OCI-LY7 (cell line): ENCODE measurements at regions of chr5 and their contacts with region 1.

Region 1: GRCh38 chr5:43019614-43020293 is 20.4 kb downstream of the ANXA2R start:
- DNase-seq: peak; percentile 95
- H3K4me3 ChIP-seq: peak overlapping the region; percentile 76
- H3K27ac ChIP-seq: peak overlapping the region; percentile 93
- H3K4me1 ChIP-seq: peaks cover 40% of the 10 kb centered on the region
- CTCF ChIP-seq: peak; percentile 73

Region 2: DNA sequence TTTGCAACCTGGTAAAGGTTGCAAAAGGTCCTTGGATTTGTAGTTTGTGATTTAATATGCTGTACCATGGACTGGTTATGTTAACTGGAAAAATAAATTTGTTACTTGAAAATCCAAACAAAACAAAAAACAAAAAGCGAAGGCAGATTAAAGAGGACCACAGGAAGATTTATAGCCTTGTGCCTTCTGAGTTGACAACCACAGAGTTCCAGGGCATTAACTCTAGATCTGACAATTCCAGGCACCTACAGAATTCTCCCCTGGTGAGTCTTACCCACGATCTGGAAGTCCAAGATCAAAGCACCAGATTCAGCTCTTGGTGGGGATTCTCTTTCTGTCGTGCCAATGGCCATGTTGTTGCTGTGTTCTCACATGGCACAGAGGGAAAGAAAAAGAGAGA is 100.2 kb before region 1 on chr5:
- CTCF ChIA-PET with region 1: no interaction called
- POLR2A ChIA-PET with region 1: no interaction called
- intact Hi-C with region 1: no loop called
- DNase-seq: no peak
- H3K4me3 ChIP-seq: no peak overlapping the region
- H3K27ac ChIP-seq: no peak overlapping the region
- H3K4me1 ChIP-seq: no peaks in the 10 kb centered on the region
- CTCF ChIP-seq: no peak

Region 3: GRCh38 chr5:43008369-43009153 is 11.2 kb before region 1 on chr5:
- CTCF ChIA-PET with region 1: interaction called, 4 read pairs
- POLR2A ChIA-PET with region 1: interaction called, 88 read pairs
- intact Hi-C with region 1: loop called (anchors 1 kb)
- DNase-seq: peak; percentile 96
- H3K4me3 ChIP-seq: peak overlapping the region; percentile 70
- H3K27ac ChIP-seq: peak overlapping the region; percentile 86
- H3K4me1 ChIP-seq: peaks cover 32% of the 10 kb centered on the region
- CTCF ChIP-seq: peak; percentile 66

Region 4: GRCh38 chr5:43033841-43034590 is 14.3 kb after region 1 on chr5:
- CTCF ChIA-PET with region 1: interaction called, 4 read pairs
- POLR2A ChIA-PET with region 1: interaction called, 19 read pairs
- intact Hi-C with region 1: no loop called
- DNase-seq: no peak
- H3K4me3 ChIP-seq: no peak overlapping the region
- H3K27ac ChIP-seq: peak overlapping the region; percentile 45
- H3K4me1 ChIP-seq: peaks cover 38% of the 10 kb centered on the region
- CTCF ChIP-seq: no peak

Region 5: DNA sequence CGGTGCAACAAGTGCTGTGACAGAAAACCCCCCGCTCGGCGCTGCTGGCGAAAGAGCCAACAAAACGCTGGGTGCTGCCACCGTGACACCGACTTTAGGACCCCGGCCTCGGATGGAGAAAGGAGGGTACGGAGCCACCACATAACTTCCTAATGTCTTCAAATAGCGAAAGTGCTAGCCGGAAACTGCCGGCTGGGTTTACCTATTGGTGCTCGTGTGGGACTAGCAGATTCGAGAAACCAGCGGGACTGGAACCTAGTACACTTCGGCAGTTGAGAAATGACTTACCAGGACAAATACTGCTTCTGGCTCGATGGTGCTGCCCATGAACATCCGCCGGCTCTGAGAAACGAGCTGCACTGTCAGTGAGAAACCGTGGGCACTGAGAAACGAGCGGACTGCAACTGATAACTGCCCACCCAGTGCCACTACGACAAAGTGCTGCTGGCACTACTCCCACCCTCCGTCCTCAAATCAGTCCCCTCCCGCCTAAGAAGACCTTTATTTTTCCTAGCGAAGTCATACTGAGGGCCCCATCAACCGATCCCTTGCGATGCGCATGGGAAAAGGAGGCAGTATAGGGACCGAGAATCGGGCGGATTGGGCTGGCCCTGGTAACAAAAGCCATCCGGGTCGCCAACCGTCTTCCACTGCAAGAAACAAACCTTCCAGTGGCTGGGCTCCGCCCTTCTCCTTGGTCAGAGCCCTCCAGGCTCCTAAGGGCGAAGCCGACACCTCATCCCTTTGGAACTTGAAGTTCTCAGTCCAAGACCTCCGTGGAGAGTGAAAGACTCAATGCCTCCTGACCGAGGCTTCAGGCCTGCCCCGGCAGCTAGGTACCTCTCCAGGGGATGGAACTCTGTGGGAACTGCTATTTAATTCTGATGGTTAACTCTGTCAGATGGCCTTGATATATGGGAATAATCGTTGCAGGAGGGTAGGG is 47.3 kb after region 1 on chr5:
- CTCF ChIA-PET with region 1: no interaction called
- POLR2A ChIA-PET with region 1: interaction called, 15 read pairs
- intact Hi-C with region 1: loop called (anchors 2 kb)
- DNase-seq: peak; percentile 93
- H3K4me3 ChIP-seq: peak overlapping the region; percentile 85
- H3K27ac ChIP-seq: peak overlapping the region; percentile 92
- H3K4me1 ChIP-seq: peaks cover 29% of the 10 kb centered on the region
- CTCF ChIP-seq: no peak